Right ventricle myocardium inferior (tissue), 1 donor: ENCODE measurements at regions of chr21 and their contacts with region 1.

Region 1: GRCh38 chr21:39518138-39518846 is 66.5 kb downstream of the SH3BGR start:
- DNase-seq: no peak
- ATAC-seq: peak; percentile 75

Region 2: GRCh38 chr21:39633770-39634181 is 115.5 kb after region 1 on chr21:
- intact Hi-C with region 1: loop called (anchors 5 kb)
- DNase-seq: no peak
- ATAC-seq: no peak

Region 3: DNA sequence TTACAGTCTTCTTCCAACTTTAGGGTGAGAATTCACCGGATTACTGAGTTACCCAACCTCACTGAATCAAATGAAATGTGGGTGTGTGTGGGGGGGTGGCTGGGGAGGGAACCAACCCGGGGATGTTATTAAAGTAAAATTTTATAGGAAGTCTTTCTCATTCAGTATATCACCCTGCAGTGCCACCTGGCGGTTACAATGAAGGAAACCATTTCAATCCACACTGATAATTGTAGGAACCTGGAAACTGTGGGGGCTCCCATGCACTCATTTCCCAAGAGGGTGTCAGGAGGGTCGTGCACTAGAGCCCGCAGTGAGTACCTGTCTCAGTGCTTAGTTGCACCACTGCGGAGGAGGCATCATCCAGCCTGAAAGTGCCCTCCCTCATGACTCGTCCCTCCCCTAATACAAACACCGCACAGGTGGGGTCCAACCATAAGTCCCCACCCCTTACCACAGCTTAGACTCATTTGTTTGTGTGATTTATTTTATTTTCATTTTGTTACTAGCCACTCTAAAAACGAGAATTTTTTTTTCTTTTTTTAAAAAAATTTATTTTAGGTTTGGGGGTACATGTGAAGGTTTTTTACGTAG is 197.6 kb after region 1 on chr21:
- intact Hi-C with region 1: loop called (anchors 1 kb)
- DNase-seq: no peak
- ATAC-seq: no peak